ENCODE measurements at regions of chr16 and their contacts with region 1.

Region 1: GRCh38 chr16:88437373-88437964 is 15.6 kb upstream of the ZFPM1 start:
- DNase-seq: no peak
- H3K4me3 ChIP-seq: no peak overlapping the region
- H3K27ac ChIP-seq: no peak overlapping the region
- H3K4me1 ChIP-seq: peaks cover 0 to 7% (median 3%) of the 10 kb centered on the region in 3 donors
- H3K27me3 ChIP-seq: peaks cover 0 to 72% (median 0%) of the 10 kb centered on the region in 4 donors
- CTCF ChIP-seq: peak; percentile 87 to 95 (median 90)
- POLR2A ChIP-seq: no peak

Region 2: GRCh38 chr16:88194397-88195268 is 242.8 kb before region 1 on chr16:
- intact Hi-C with region 1: loop called (anchors 5 kb)
- DNase-seq: no peak
- H3K4me3 ChIP-seq: peak overlapping the region in 3 of 4 donors; percentile 4 to 23 (median 4)
- H3K27ac ChIP-seq: peak overlapping the region; percentile 19 to 59 (median 43)
- H3K4me1 ChIP-seq: peaks cover 3 to 21% (median 7%) of the 10 kb centered on the region in 3 donors
- H3K27me3 ChIP-seq: peaks cover 0 to 38% (median 0%) of the 10 kb centered on the region in 4 donors
- CTCF ChIP-seq: no peak
- POLR2A ChIP-seq: no peak

Measured in esophagus squamous epithelium (tissue), 5 donors.